Activated B cell treated with CpG ODN at 0.5 μM for 24 hours (primary cell): ENCODE measurements at regions of chr1 and their contacts with region 1.

Region 1: DNA sequence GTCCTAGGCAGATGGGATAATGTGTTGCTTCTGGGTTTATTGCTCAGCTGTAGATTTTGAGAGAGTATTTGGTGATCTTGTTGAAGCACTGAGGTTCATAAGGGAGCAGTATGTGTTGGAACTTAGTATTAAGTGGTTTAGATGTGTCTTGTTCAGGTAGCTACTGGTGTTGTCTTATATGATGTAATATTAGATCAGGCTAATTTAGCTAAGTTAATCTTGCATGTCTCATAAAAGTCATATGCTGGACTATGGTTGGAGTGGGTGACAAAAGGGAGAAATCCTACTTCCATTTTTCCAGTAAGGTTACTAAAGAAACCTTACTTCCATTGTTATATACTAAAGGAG is 196.4 kb downstream of the CLEC20A start:
- DNase-seq: no peak
- ATAC-seq: no peak
- H3K4me3 Mint-ChIP-seq: no peak overlapping the region
- H3K27ac Mint-ChIP-seq: no peak overlapping the region
- H3K4me1 Mint-ChIP-seq: no peaks in the 10 kb centered on the region
- H3K27me3 Mint-ChIP-seq: peaks cover 6% of the 10 kb centered on the region
- CTCF ChIP-seq: no peak

Region 2: DNA sequence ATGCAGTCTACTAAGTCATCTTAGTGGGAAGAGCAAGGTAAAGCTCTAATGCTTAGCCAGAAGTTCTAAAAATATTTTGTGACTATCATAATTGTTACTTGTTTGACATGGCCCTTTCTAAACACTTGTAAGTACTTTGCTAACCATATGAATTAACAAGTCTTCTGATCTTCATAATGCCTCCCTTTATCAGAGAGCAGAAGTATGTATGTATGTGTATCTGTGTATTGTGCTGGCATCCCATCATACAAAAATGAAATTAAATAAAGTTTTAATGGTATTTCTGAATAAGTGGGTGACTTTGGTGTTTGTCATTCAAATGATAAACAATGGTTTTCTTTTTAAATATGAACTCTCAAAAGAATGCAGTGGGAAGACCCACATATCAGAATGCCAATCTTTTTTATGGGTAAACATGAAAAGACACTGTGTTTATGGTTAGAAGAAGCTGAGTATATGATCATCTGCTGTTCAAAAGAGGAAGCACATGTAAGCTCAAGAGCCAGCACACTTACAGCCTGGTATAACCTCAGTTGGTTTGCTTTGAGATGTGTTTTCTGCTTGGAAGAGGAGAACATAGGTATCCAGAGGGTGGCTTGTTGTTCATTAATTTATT is 36.9 kb after region 1 on chr1:
- CTCF ChIA-PET with region 1: no interaction called
- POLR2A ChIA-PET with region 1: no interaction called
- intact Hi-C with region 1: no loop called
- DNase-seq: no peak
- ATAC-seq: no peak
- H3K4me3 Mint-ChIP-seq: no peak overlapping the region
- H3K27ac Mint-ChIP-seq: no peak overlapping the region
- H3K4me1 Mint-ChIP-seq: no peaks in the 10 kb centered on the region
- H3K27me3 Mint-ChIP-seq: peaks cover 4% of the 10 kb centered on the region
- CTCF ChIP-seq: no peak

Region 3: GRCh38 chr1:178501705-178502329 is 201.5 kb after region 1 on chr1:
- CTCF ChIA-PET with region 1: interaction called, 18 read pairs
- POLR2A ChIA-PET with region 1: no interaction called
- intact Hi-C with region 1: loop called (anchors 2 kb)
- DNase-seq: peak; percentile 56
- ATAC-seq: peak; percentile 70
- H3K4me3 Mint-ChIP-seq: no peak overlapping the region
- H3K27ac Mint-ChIP-seq: no peak overlapping the region
- H3K4me1 Mint-ChIP-seq: peaks cover 2% of the 10 kb centered on the region
- H3K27me3 Mint-ChIP-seq: no peaks in the 10 kb centered on the region
- CTCF ChIP-seq: no peak